GM10248 (cell line): ENCODE measurements at regions of chr10 and their contacts with region 1.

Region 1: GRCh38 chr10:58177362-58177947 is 90.2 kb downstream of the IPMK start:
- DNase-seq: peak; percentile 24
- CTCF ChIP-seq: peak; percentile 51

Region 2: DNA sequence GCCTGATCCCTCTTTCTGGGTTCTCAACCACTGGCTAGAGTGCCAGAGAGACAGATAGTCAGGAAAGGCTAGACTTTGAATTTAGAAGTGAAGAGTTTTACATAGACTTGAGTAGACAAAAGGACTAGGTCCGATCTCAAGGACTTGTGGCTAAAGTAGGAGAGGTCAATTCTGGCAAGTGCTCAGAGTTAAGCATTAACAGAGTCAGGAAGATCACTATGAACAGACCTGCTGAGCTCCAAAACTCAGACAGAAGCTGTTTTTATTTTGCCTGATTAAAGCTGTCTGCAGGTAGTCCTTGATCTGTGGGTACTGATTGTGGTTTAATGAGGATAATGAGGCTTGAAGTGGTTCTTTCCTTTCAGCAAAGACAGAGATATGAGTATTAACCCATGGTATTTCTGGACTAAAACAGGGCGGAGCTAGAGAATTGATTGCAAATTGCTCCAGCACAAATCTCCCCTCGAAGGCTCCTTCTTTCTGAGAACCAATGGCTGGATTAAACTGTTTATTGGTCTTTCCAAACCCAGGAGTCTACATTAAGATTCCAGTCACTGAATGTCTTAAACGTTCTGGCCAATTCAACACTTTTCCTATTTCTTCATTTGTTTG is 333.0 kb before region 1 on chr10:
- CTCF ChIA-PET with region 1: no interaction called
- POLR2A ChIA-PET with region 1: no interaction called
- DNase-seq: no peak
- CTCF ChIP-seq: no peak

Region 3: DNA sequence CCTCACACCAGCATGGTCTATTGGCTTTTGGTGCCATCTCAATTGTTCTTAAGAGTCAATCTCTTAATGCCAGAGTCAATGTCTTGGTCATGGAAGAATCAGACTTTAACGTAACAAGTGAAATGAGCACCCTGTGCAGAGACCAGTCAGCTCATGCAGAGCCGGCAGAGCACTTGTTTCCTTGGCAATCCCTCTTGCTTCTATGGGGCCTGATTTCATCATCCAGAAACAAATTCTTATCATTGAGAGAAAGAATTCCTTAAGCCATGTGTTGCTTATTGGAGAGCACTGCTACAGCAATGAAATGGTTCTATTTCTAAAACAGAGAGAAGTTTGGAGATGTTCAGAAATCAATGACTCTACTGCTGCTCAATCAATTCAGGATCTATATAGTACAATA is 122.6 kb before region 1 on chr10:
- CTCF ChIA-PET with region 1: no interaction called
- POLR2A ChIA-PET with region 1: no interaction called
- DNase-seq: no peak
- CTCF ChIP-seq: no peak

Region 4: GRCh38 chr10:58189269-58189668 is 11.8 kb after region 1 on chr10:
- CTCF ChIA-PET with region 1: interaction called, 21 read pairs
- POLR2A ChIA-PET with region 1: no interaction called
- DNase-seq: no peak
- CTCF ChIP-seq: no peak

Region 5: GRCh38 chr10:58201704-58202103 is 24.2 kb after region 1 on chr10:
- CTCF ChIA-PET with region 1: interaction called, 16 read pairs
- POLR2A ChIA-PET with region 1: no interaction called
- DNase-seq: no peak
- CTCF ChIP-seq: no peak